T-cell (primary cell): ENCODE measurements at regions of chr5 and their contacts with region 1.

Region 1: DNA sequence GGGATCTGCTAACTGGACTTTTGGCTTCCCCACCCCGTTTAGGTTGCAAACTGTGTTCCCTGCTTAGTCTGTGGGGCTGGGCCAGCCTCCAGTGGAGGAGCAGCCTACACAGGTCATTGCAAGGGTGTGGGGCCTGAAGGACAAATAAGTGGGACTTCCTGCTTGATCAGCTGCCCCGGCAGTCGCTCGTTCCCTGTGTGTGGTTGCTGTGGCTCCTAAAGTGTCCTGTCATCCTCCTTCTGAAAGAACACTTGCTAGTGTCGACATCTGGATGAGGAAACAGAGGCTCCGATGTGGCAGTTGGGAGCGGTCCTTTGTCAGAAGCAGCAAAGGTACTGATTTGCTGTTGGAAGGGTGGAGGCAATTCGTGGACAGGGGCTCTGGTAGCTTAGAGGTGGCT is 88.9 kb upstream of the TBCA start:
- DNase-seq: peak in 1 of 35 experiments; percentile 19
- ATAC-seq: no peak
- H3K4me3 ChIP-seq: no peak overlapping the region
- H3K4me3 Mint-ChIP-seq: no peak overlapping the region
- H3K27ac ChIP-seq: no peak overlapping the region
- H3K27ac Mint-ChIP-seq: no peak overlapping the region
- H3K4me1 ChIP-seq: no peaks in the 10 kb centered on the region
- H3K4me1 Mint-ChIP-seq: no peaks in the 10 kb centered on the region
- H3K27me3 ChIP-seq: peaks cover 0 to 14% of the 10 kb centered on the region in 2 experiments
- H3K27me3 Mint-ChIP-seq: peaks cover 0 to 8% of the 10 kb centered on the region in 2 donors

Region 2: DNA sequence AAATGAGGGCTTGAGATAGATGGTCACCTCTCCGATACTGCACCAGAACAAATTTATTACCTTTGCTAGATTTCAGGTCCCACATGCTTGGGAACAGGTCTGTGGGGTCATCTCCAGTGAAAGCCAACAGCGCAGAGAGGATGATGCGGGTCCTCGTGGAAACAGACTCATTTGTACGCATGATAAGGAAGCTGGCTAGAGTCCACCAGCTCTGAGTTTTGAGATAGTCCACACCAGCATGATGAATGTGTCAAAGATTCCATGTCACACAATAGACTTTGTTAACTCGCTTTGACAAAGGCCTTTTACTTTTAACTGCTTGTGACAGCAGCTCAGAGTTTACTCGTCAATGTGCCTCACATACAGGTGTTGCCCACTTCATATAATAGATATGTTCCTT is 16.5 kb after region 1 on chr5:
- CTCF ChIA-PET with region 1: interaction called in 1 of 2 experiments, 3 read pairs
- POLR2A ChIA-PET with region 1: interaction called, 5 to 10 read pairs
- DNase-seq: no peak
- ATAC-seq: no peak
- H3K4me3 ChIP-seq: no peak overlapping the region
- H3K4me3 Mint-ChIP-seq: no peak overlapping the region
- H3K27ac ChIP-seq: no peak overlapping the region
- H3K27ac Mint-ChIP-seq: no peak overlapping the region
- H3K4me1 ChIP-seq: no peaks in the 10 kb centered on the region
- H3K4me1 Mint-ChIP-seq: peaks cover 1 to 11% (median 2%) of the 10 kb centered on the region in 3 donors
- H3K27me3 ChIP-seq: peaks cover 0 to 14% of the 10 kb centered on the region in 2 experiments
- H3K27me3 Mint-ChIP-seq: peaks cover 16 to 17% of the 10 kb centered on the region in 2 donors

Region 3: DNA sequence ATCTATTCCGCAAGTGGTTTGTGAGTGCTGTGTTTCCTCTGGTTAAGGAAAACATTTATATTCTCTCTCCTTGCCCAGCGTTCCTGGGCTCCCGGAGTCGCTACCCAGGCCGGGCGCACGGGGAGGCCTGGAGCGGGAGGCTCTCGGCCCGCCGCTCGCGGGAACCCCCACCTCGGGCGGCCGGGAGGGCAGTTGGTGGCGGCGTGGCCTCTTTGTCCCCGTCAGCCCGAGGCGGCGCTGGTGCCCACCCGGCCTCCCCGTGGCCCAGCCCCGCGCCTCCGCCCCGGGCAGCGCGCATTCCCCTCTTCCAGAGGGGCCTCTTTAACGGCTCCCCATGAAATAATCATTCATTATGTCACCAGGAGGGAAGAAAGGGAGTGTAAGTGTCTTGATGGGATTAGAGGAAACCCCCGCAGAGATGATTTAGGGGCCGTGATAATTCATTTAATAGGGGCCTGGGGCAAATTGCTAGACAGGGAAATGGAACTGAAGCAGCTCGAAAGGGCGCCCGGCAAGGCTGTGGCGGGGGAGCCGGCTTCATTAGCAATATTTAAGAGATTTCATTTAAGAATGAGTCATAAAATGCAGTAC is 93.0 kb after region 1 on chr5:
- CTCF ChIA-PET with region 1: no interaction called
- POLR2A ChIA-PET with region 1: no interaction called
- DNase-seq: no peak
- ATAC-seq: no peak
- H3K4me3 ChIP-seq: no peak overlapping the region
- H3K4me3 Mint-ChIP-seq: peak overlapping the region in 1 of 3 donors; percentile 13
- H3K27ac ChIP-seq: no peak overlapping the region
- H3K27ac Mint-ChIP-seq: no peak overlapping the region
- H3K4me1 ChIP-seq: peaks cover 4 to 8% of the 10 kb centered on the region in 2 experiments
- H3K4me1 Mint-ChIP-seq: peaks cover 18 to 25% (median 19%) of the 10 kb centered on the region in 3 donors
- H3K27me3 ChIP-seq: peaks cover 5 to 24% of the 10 kb centered on the region in 2 experiments
- H3K27me3 Mint-ChIP-seq: peaks cover 23 to 41% of the 10 kb centered on the region in 2 donors